ENCODE measurements at regions of chr10 and their contacts with region 1.

Region 1: DNA sequence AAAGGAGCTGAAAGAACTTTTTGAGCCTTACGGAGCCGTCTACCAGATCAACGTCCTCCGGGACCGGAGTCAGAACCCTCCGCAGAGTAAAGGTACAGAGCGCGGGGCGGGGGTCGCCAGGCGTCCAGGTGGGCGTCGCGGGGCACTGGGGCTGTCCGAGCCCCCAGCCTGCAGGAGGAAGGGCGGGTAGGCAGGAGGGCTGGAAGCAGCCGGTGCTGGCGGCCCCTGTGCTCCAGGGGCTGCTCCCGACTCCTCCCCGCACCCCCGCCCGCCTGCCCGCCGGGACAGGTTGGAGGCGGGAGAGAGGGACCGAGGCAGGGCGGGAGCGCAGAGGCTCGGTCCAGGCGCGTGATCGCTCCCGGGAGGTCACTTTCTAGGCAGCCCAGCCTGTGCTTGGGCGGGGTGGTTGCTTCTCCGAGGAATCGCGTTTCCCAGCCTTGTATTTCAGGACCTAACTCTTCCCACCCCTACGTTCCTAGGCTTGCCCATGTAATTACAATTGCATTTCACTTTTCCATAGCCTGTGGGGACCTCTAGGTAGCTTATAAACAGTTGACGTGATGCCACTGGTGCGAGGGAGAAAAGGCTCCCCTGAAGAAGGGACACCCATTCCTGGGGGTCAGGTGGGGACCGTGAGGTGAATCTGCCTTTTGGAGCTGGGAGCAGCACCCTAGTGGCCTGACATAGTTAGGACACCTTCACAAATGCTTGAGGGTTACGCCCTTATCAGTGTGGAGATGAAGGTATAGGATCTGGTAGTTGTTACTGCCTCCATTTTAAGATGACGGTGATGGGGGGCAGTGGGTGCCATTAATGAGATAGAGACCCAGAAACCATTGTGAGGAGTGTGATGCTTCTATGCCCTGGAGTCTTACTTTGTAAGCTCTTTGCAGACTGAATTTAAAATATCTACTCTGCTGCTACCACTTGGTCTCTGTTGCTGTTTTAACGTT is 148.2 kb downstream of the CELF2 start:
- DNase-seq: peak; percentile 86

Region 2: GRCh38 chr10:10792681-10793080 is 373.2 kb before region 1 on chr10:
- intact Hi-C with region 1: no loop called
- DNase-seq: no peak

Region 3: DNA sequence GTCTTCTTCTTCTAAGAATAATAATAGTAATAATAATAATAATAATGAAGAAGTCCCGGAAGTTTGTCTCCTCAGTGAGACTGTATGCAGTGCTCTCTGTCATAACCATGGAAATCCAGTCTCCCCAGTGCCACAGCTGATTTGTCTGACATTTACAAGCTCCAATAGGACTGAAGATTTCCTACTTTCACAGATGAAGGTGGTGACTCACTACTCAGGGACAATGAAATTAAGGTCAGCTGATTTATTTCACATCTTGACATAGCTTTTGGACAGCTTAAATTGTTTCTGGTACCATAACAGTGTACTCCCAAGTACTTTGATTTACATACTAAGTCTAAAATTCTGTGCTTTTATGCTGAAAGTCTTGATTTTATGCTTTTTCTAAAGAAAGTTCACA is 141.3 kb before region 1 on chr10:
- intact Hi-C with region 1: loop called (anchors 5 kb)
- DNase-seq: no peak

Region 4: DNA sequence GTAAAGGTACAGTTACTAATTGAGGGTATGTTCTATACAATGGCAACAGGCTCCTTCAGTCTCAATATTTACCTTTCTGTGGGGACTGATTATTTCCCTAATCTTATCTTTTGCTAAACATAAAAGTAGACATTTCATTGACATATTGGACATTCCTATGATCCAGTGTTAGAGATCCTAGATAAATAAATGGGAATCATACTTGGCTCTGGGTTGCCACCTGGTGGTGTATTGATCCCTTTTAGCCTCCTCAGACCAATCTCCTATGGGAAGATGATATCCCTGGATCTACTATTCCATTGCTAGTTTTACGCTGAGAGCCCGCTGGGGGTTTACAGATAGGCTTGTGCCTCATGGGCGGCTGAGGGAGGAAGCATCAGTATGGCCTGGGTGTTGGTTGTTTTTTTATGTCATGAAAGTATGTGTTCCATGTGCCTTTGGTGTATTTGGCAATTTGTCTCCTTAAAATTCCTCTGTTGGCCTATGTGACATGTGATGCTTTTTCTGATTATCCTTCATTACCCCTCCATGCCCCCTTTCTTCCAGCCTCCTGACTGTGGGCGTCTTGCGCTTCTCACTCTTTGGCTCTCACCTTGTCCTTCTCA is 129.4 kb before region 1 on chr10:
- intact Hi-C with region 1: loop called (anchors 5 kb)
- DNase-seq: no peak

Region 5: GRCh38 chr10:11115337-11115736 is 50.5 kb before region 1 on chr10:
- intact Hi-C with region 1: loop called (anchors 5 kb)
- DNase-seq: no peak

Measured in cardiac septum (tissue), 1 donor.